ENCODE measurements at regions of chr6 and their contacts with region 1.

Region 1: DNA sequence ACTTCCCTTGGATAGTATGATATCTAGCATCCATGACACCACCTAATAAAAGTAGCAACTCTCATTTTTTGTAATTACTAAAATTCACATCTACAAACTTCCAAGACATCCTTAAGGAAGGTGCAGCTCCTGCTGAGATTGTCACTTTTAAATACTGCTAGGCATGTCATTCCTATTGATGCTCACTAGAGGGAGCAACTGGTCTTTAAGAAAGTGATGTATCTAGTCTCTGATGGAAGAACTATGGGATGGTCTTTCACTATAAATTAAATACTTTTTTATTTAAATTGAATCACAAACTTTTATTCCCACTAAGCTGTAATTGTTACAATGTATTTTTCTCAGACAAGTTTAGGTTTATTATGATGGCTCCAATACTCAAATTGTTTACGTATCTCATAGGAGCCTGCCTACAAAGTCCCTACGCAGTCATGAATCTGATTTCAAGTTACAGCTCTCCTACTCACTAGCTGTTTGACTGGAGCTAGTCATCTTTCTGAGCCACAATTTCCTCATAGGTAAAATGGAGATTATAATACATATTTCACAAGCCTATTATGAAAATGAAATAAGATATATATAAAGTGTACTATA is 8.1 kb upstream of the TSPYL1 start:
- DNase-seq: peak; percentile 51
- ATAC-seq: peak; percentile 84
- H3K4me3 ChIP-seq: no peak overlapping the region
- H3K27ac ChIP-seq: no peak overlapping the region
- H3K4me1 ChIP-seq: no peaks in the 10 kb centered on the region
- H3K27me3 ChIP-seq: no peaks in the 10 kb centered on the region
- CTCF ChIP-seq: peak; percentile 77 to 85 (median 80)
- POLR2A ChIP-seq: no peak
- RAD21 ChIP-seq: peak; percentile 89

Region 2: GRCh38 chr6:115740907-115741306 is 546.9 kb before region 1 on chr6:
- CTCF ChIA-PET with region 1: no interaction called
- POLR2A ChIA-PET with region 1: no interaction called
- RAD21 ChIA-PET with region 1: no interaction called
- intact Hi-C with region 1: no loop called
- DNase-seq: no peak
- ATAC-seq: no peak
- H3K4me3 ChIP-seq: no peak overlapping the region
- H3K27ac ChIP-seq: no peak overlapping the region
- H3K4me1 ChIP-seq: no peaks in the 10 kb centered on the region
- H3K27me3 ChIP-seq: no peaks in the 10 kb centered on the region
- CTCF ChIP-seq: no peak
- POLR2A ChIP-seq: no peak
- RAD21 ChIP-seq: no peak

Region 3: GRCh38 chr6:116268589-116269293 is 19.0 kb before region 1 on chr6:
- CTCF ChIA-PET with region 1: interaction called, 20 read pairs
- POLR2A ChIA-PET with region 1: no interaction called
- RAD21 ChIA-PET with region 1: no interaction called
- intact Hi-C with region 1: no loop called
- DNase-seq: peak; percentile 68
- ATAC-seq: peak; percentile 95
- H3K4me3 ChIP-seq: no peak overlapping the region
- H3K27ac ChIP-seq: no peak overlapping the region
- H3K4me1 ChIP-seq: peaks cover 0 to 10% of the 10 kb centered on the region in 2 experiments; a peak in 2 of 4 replicates
- H3K27me3 ChIP-seq: no peaks in the 10 kb centered on the region
- CTCF ChIP-seq: peak; percentile 84 to 99 (median 96)
- POLR2A ChIP-seq: no peak
- RAD21 ChIP-seq: peak; percentile 88

Region 4: DNA sequence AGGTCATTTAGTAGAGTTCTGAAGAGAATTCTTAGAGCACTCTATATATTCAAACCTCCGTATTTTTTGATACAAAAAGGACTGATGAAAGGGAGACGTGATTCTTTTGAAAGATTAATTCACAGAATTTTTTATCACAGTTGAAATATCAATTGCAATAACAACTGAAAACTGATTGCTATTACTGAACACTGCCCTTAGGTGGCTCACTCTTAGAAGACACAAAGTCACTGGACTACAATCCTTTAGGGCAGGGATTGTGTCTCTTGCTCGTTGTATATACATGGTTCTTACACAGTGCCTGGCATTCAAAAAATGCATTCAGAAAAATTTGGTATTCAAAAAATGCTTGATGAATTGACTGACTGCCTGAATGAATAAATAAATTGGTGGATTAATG is 156.3 kb after region 1 on chr6:
- CTCF ChIA-PET with region 1: interaction called, 10 read pairs
- POLR2A ChIA-PET with region 1: no interaction called
- RAD21 ChIA-PET with region 1: no interaction called
- intact Hi-C with region 1: no loop called
- DNase-seq: peak; percentile 7
- ATAC-seq: peak; percentile 82
- H3K4me3 ChIP-seq: no peak overlapping the region
- H3K27ac ChIP-seq: no peak overlapping the region
- H3K4me1 ChIP-seq: no peaks in the 10 kb centered on the region
- H3K27me3 ChIP-seq: no peaks in the 10 kb centered on the region
- CTCF ChIP-seq: peak; percentile 31 to 63 (median 54); a peak in 5 of 6 replicates
- POLR2A ChIP-seq: no peak
- RAD21 ChIP-seq: peak; percentile 39; the same call in 1 of the 2 replicates

Region 5: GRCh38 chr6:116511404-116512110 is 223.8 kb after region 1 on chr6 and contains the start of gene CALHM5:
- CTCF ChIA-PET with region 1: interaction called, 15 read pairs
- POLR2A ChIA-PET with region 1: no interaction called
- RAD21 ChIA-PET with region 1: no interaction called
- intact Hi-C with region 1: no loop called
- DNase-seq: peak; percentile 58
- ATAC-seq: peak; percentile 92
- H3K4me3 ChIP-seq: no peak within 1 kb of the TSS
- H3K27ac ChIP-seq: no peak within 1 kb of the TSS
- H3K4me1 ChIP-seq: peaks cover 0 to 9% of the 10 kb centered on the region in 2 experiments; a peak in 2 of 4 replicates
- H3K27me3 ChIP-seq: no peaks in the 10 kb centered on the region
- CTCF ChIP-seq: peak; percentile 62 to 66 (median 66); a peak in 5 of 6 replicates
- POLR2A ChIP-seq: no peak
- RAD21 ChIP-seq: peak; percentile 56
- total RNA-seq, gene CALHM5: 0.05 TPM

Region 6: GRCh38 chr6:116531675-116532570 is 244.1 kb after region 1 on chr6:
- CTCF ChIA-PET with region 1: interaction called, 26 read pairs
- POLR2A ChIA-PET with region 1: no interaction called
- RAD21 ChIA-PET with region 1: no interaction called
- intact Hi-C with region 1: loop called (anchors 1 kb)
- DNase-seq: peak; percentile 60
- ATAC-seq: peak; percentile 81
- H3K4me3 ChIP-seq: no peak overlapping the region
- H3K27ac ChIP-seq: no peak overlapping the region
- H3K4me1 ChIP-seq: peaks cover 3 to 17% of the 10 kb centered on the region in 2 experiments; a peak in 3 of 4 replicates
- H3K27me3 ChIP-seq: no peaks in the 10 kb centered on the region
- CTCF ChIP-seq: peak; percentile 66 to 86 (median 78)
- POLR2A ChIP-seq: no peak
- RAD21 ChIP-seq: peak; percentile 75

Region 7: GRCh38 chr6:116561377-116562018 is 273.7 kb after region 1 on chr6:
- CTCF ChIA-PET with region 1: interaction called, 16 read pairs
- POLR2A ChIA-PET with region 1: interaction called, 4 read pairs
- RAD21 ChIA-PET with region 1: interaction called in 1 of 2 experiments, 5 read pairs
- intact Hi-C with region 1: loop called (anchors 2 kb)
- DNase-seq: peak; percentile 55
- ATAC-seq: peak; percentile 80
- H3K4me3 ChIP-seq: no peak overlapping the region
- H3K27ac ChIP-seq: no peak overlapping the region
- H3K4me1 ChIP-seq: peaks cover 3 to 20% of the 10 kb centered on the region in 2 experiments; a peak in 3 of 4 replicates
- H3K27me3 ChIP-seq: no peaks in the 10 kb centered on the region
- CTCF ChIP-seq: peak; percentile 90 to 95 (median 91)
- POLR2A ChIP-seq: no peak
- RAD21 ChIP-seq: peak; percentile 87

Region 8: DNA sequence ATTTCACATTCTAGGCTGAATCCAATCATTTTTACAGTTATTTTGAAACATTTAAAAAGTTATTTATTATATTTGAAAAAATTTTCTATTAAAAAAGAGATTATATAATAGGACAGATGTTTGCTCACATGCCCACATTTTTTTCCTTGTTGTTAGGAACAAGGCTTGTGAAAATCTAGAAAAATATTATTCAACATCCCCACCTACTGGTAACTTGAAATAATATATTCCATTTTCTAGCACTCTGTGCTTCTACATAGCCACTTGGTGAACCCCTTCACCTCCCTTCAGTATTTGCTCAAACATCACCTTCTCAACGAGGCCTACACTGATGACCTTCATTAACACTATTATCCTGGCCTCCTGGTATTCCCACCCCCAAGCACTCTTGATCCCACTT is 559.4 kb after region 1 on chr6:
- CTCF ChIA-PET with region 1: no interaction called
- POLR2A ChIA-PET with region 1: no interaction called
- RAD21 ChIA-PET with region 1: no interaction called
- intact Hi-C with region 1: loop called (anchors 5 kb)
- DNase-seq: peak; percentile 35
- ATAC-seq: peak; percentile 80
- H3K4me3 ChIP-seq: no peak overlapping the region
- H3K27ac ChIP-seq: no peak overlapping the region
- H3K4me1 ChIP-seq: no peaks in the 10 kb centered on the region
- H3K27me3 ChIP-seq: no peaks in the 10 kb centered on the region
- CTCF ChIP-seq: peak; percentile 12 to 51 (median 30); a peak in 4 of 6 replicates
- POLR2A ChIP-seq: no peak
- RAD21 ChIP-seq: peak; percentile 60

Region 9: GRCh38 chr6:117018771-117019170 is 731.0 kb after region 1 on chr6:
- CTCF ChIA-PET with region 1: no interaction called
- POLR2A ChIA-PET with region 1: no interaction called
- RAD21 ChIA-PET with region 1: no interaction called
- intact Hi-C with region 1: no loop called
- DNase-seq: no peak
- ATAC-seq: no peak
- H3K4me3 ChIP-seq: no peak overlapping the region
- H3K27ac ChIP-seq: no peak overlapping the region
- H3K4me1 ChIP-seq: no peaks in the 10 kb centered on the region
- H3K27me3 ChIP-seq: no peaks in the 10 kb centered on the region
- CTCF ChIP-seq: no peak
- POLR2A ChIP-seq: no peak
- RAD21 ChIP-seq: no peak